ENCODE measurements at regions of chr1 and their contacts with region 1.

Region 1: GRCh38 chr1:151510957-151511635 is at the start of gene CGN:
- DNase-seq: peak; percentile 72 to 90 (median 84)
- ATAC-seq: peak; percentile 99
- H3K4me3 ChIP-seq: peak within 1 kb of the TSS; percentile 89
- H3K4me3 Mint-ChIP-seq: peak within 1 kb of the TSS; percentile 90 to 99 (median 94)
- H3K27ac ChIP-seq: peak within 1 kb of the TSS; percentile 65
- H3K27ac Mint-ChIP-seq: peak within 1 kb of the TSS; percentile 38 to 93 (median 86)
- H3K4me1 ChIP-seq: peaks cover 13 to 18% of the 10 kb centered on the region in 2 donors
- H3K4me1 Mint-ChIP-seq: peaks cover 12 to 36% (median 25%) of the 10 kb centered on the region in 7 donors
- H3K27me3 ChIP-seq: no peaks in the 10 kb centered on the region
- H3K27me3 Mint-ChIP-seq: peaks cover 0 to 38% (median 0%) of the 10 kb centered on the region in 5 donors
- total RNA-seq, gene CGN: 0.29 to 2.4 (median 1.3) TPM in 4 of 5 experiments, not detected in the other

Region 2: GRCh38 chr1:151534665-151535278 is 23.7 kb after region 1 on chr1:
- CTCF ChIA-PET with region 1: no interaction called
- POLR2A ChIA-PET with region 1: interaction called, 6 read pairs
- intact Hi-C with region 1: loop called in 1 of 2 experiments (anchors 1 kb)
- DNase-seq: peak; percentile 28 to 78 (median 59)
- ATAC-seq: peak; percentile 88
- H3K4me3 ChIP-seq: no peak overlapping the region
- H3K4me3 Mint-ChIP-seq: no peak overlapping the region
- H3K27ac ChIP-seq: no peak overlapping the region
- H3K27ac Mint-ChIP-seq: peak overlapping the region in 1 of 9 donors; percentile 67
- H3K4me1 ChIP-seq: peaks cover 6% of the 10 kb centered on the region in 2 donors
- H3K4me1 Mint-ChIP-seq: peaks cover 0 to 8% (median 3%) of the 10 kb centered on the region in 7 donors
- H3K27me3 ChIP-seq: no peaks in the 10 kb centered on the region
- H3K27me3 Mint-ChIP-seq: peaks cover 0 to 4% (median 0%) of the 10 kb centered on the region in 5 donors

Region 3: GRCh38 chr1:151539990-151540981 is 29.2 kb after region 1 on chr1 and contains the start of gene TUFT1:
- CTCF ChIA-PET with region 1: no interaction called
- POLR2A ChIA-PET with region 1: interaction called, 6 read pairs
- intact Hi-C with region 1: loop called in 1 of 2 experiments (anchors 1 kb)
- DNase-seq: peak; percentile 89 to 95 (median 93)
- ATAC-seq: peak; percentile 100
- H3K4me3 ChIP-seq: peak within 1 kb of the TSS; percentile 90
- H3K4me3 Mint-ChIP-seq: peak within 1 kb of the TSS; percentile 91 to 98 (median 97)
- H3K27ac ChIP-seq: peak within 1 kb of the TSS; percentile 71
- H3K27ac Mint-ChIP-seq: peak within 1 kb of the TSS; percentile 70 to 93 (median 89)
- H3K4me1 ChIP-seq: peaks cover 11 to 18% of the 10 kb centered on the region in 2 donors
- H3K4me1 Mint-ChIP-seq: peaks cover 12 to 31% (median 22%) of the 10 kb centered on the region in 7 donors
- H3K27me3 ChIP-seq: no peaks in the 10 kb centered on the region
- H3K27me3 Mint-ChIP-seq: peaks cover 6 to 24% (median 8%) of the 10 kb centered on the region in 5 donors
- total RNA-seq, gene TUFT1: 0.92 to 4.8 (median 3.4) TPM

Measured in naive thymus-derived CD4-positive, alpha-beta T cell (primary cell).